GM12878 (cell line): ENCODE measurements at regions of chr1 and their contacts with region 1.

Region 1: DNA sequence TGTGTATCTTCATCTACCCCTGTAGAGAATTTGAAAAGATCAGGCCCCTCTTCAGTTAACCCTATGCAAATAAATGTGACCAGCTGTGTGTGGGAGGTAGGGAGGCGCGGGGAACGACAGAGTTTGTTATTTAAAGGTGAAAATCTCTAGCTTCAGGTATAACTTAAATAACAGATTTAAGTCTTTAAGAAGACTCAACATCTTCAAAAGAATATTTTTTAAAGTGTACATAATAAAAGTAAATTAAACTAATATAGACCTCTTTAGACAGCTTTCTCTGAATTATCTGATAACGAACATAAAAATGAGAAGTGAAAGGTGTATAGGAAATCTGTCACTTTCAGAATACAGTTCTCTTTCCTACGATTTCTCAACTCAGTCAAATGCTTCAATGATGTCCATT is 16.0 kb downstream of the ANGPTL3 start:
- DNase-seq: peak; percentile 27
- ATAC-seq: peak; percentile 98
- H3K4me3 ChIP-seq: 0 out of 2 replicates have a peak overlapping the region, but pooled peaks have one; percentile 4
- H3K27ac ChIP-seq: peak overlapping the region; percentile 66
- H3K4me1 ChIP-seq: peaks cover 11% of the 10 kb centered on the region
- H3K27me3 ChIP-seq: no peaks in the 10 kb centered on the region
- CTCF ChIP-seq: no peak
- EP300 ChIP-seq: peak; percentile 31 to 75; a peak in 3 of 4 replicates
- POLR2A ChIP-seq: no peak
- RAD21 ChIP-seq: no peak

Region 2: DNA sequence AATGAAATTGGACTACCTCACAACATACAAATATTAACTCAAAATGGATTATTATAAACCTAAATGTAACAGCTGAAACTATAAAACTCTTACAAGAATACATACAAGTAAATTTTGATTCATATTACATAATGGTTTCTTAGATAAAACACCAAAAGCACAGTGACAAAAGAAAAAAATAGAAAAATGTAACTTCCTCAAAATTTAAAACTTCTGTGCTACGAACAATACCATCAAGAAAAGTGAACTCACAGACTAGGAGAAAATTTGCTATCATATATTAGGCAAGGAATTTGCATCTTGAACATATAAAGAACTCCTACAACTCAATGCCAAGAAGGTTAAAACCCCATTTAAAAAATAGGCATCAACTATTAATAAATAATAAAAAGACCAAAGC is 15.2 kb after region 1 on chr1:
- CTCF ChIA-PET with region 1: interaction called, 27 read pairs
- POLR2A ChIA-PET with region 1: interaction called, 10 read pairs
- RAD21 ChIA-PET with region 1: interaction called, 31 read pairs
- SMC1A ChIA-PET with region 1: interaction called, 50 read pairs
- in situ Hi-C with region 1: no loop called
- intact Hi-C with region 1: no loop called
- DNase-seq: no peak
- ATAC-seq: no peak
- H3K4me3 ChIP-seq: no peak overlapping the region
- H3K27ac ChIP-seq: no peak overlapping the region
- H3K4me1 ChIP-seq: no peaks in the 10 kb centered on the region; the same call in 1 of the 2 replicates
- H3K27me3 ChIP-seq: no peaks in the 10 kb centered on the region
- CTCF ChIP-seq: no peak
- EP300 ChIP-seq: no peak
- POLR2A ChIP-seq: no peak
- RAD21 ChIP-seq: no peak

Region 3: GRCh38 chr1:62687903-62688686 is 74.8 kb after region 1 on chr1 and contains the start of gene DOCK7:
- CTCF ChIA-PET with region 1: no interaction called
- POLR2A ChIA-PET with region 1: no interaction called
- RAD21 ChIA-PET with region 1: interaction called, 5 read pairs
- SMC1A ChIA-PET with region 1: interaction called, 11 read pairs
- in situ Hi-C with region 1: no loop called
- intact Hi-C with region 1: no loop called
- DNase-seq: no peak
- ATAC-seq: peak; percentile 77
- H3K4me3 ChIP-seq: peak within 1 kb of the TSS; percentile 87
- H3K27ac ChIP-seq: peak within 1 kb of the TSS; percentile 83
- H3K4me1 ChIP-seq: peaks cover 4% of the 10 kb centered on the region; the same call in 1 of the 2 replicates
- H3K27me3 ChIP-seq: no peaks in the 10 kb centered on the region
- CTCF ChIP-seq: no peak
- EP300 ChIP-seq: no peak
- POLR2A ChIP-seq: peak; percentile 77
- RAD21 ChIP-seq: no peak
- polyA plus RNA-seq, gene DOCK7: 4.8 to 7.0 TPM